K562 (cell line): ENCODE measurements at regions of chr11 and their contacts with region 1.

Region 1: DNA sequence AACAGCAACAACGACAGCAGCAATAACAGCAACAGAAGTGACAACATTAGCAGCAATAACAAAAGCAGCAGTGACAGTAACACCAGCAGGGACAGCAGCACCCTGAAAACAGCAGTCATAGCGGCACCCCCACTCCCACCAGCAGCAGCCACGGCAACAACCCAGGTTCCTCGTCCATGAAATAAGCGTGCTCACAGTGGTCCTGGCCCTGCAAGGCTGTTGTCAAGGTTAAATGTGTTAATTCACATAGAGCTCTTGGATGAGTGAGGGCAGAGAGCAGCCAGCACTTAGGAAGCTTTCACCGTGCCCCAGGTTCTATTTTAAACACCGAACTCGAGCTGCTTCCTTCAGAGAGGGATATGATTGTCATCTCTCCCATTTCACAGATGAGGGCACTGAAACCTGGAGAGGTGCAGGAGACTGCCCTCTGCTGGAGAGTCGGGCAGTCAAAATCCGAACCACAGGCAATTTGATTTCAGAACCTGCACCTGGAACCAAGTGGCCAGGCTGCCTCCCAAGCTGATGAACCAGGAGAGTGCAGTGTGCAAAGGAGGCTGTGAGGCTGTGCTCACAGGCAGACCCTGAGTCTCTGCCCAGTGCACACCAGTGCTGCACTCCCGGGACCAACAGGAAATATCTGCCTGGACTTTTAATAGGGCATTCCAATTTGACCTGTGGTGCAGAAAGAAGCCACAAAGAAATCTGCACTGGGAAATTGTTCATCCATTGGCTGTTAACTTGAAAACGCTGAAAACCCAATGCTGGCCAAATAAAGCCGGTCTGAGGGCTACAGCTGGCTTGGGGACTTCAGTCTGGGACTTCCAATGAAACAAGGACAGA is 22.9 kb upstream of the FGF3 start:
- DNase-seq: peak; percentile 45 to 60 (median 51)
- ATAC-seq: peak; percentile 36; the same call in 1 of the 3 replicates
- H3K4me3 ChIP-seq: no peak overlapping the region
- H3K27ac ChIP-seq: no peak overlapping the region
- H3K4me1 ChIP-seq: peaks cover 0 to 4% of the 10 kb centered on the region in 2 experiments; a peak in 1 of 5 replicates
- H3K27me3 ChIP-seq: peaks cover 0 to 26% of the 10 kb centered on the region in 2 experiments; a peak in 3 of 5 replicates
- CTCF ChIP-seq: peak; percentile 51 to 68 (median 61)
- EP300 ChIP-seq: no peak
- POLR2A ChIP-seq: no peak
- RAD21 ChIP-seq: peak in 1 of 2 experiments; percentile 54; a peak in 2 of 4 replicates

Region 2: GRCh38 chr11:69683764-69684333 is 158.2 kb before region 1 on chr11:
- CTCF ChIA-PET with region 1: no interaction called
- POLR2A ChIA-PET with region 1: no interaction called
- in situ Hi-C with region 1: no loop called
- intact Hi-C with region 1: loop called (anchors 5 kb)
- DNase-seq: peak in 3 of 4 experiments; percentile 38 to 54 (median 44)
- ATAC-seq: peak; percentile 76
- H3K4me3 ChIP-seq: no peak overlapping the region
- H3K27ac ChIP-seq: no peak overlapping the region; the same call in 2 of the 3 replicates
- H3K4me1 ChIP-seq: peaks cover 0 to 13% of the 10 kb centered on the region in 2 experiments; a peak in 3 of 5 replicates
- H3K27me3 ChIP-seq: no peaks in the 10 kb centered on the region
- CTCF ChIP-seq: peak; percentile 56 to 73 (median 61)
- EP300 ChIP-seq: no peak
- POLR2A ChIP-seq: no peak
- RAD21 ChIP-seq: peak; percentile 31 to 79; a peak in 2 of 4 replicates